Esophagus muscularis mucosa (tissue), 4 donors: ENCODE measurements at regions of chr1 and their contacts with region 1.

Region 1: DNA sequence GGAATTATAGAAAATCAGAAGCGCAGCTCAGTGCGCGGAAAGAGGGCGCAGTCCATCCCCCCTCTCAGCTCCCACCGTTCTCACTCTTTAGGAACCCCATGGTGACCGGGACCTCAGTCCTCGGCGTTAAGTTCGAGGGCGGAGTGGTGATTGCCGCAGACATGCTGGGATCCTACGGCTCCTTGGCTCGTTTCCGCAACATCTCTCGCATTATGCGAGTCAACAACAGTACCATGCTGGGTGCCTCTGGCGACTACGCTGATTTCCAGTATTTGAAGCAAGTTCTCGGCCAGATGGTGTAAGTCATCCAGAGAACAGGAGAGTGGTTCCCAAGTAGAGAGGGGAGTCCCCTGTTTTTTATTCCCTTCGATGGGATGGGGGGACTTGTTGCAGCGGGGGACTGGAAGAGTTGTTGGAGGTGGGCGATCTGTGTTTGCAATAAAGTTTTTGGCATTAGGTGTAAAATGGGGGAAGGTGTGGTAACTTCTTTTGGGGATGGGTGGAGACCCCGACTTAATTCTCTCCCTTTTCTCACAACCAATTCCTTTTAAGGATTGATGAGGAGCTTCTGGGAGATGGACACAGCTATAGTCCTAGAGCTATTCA is 620 bp downstream of the PSMB4 start:
- DNase-seq: peak; percentile 57
- H3K4me3 ChIP-seq: peak overlapping the region; percentile 69 to 93 (median 90)
- H3K27ac ChIP-seq: peak overlapping the region; percentile 88 to 93 (median 92)
- H3K4me1 ChIP-seq: peaks cover 16 to 21% (median 17%) of the 10 kb centered on the region in 4 donors
- H3K27me3 ChIP-seq: no peaks in the 10 kb centered on the region
- CTCF ChIP-seq: no peak
- EP300 ChIP-seq: no peak
- POLR2A ChIP-seq: no peak

Region 2: DNA sequence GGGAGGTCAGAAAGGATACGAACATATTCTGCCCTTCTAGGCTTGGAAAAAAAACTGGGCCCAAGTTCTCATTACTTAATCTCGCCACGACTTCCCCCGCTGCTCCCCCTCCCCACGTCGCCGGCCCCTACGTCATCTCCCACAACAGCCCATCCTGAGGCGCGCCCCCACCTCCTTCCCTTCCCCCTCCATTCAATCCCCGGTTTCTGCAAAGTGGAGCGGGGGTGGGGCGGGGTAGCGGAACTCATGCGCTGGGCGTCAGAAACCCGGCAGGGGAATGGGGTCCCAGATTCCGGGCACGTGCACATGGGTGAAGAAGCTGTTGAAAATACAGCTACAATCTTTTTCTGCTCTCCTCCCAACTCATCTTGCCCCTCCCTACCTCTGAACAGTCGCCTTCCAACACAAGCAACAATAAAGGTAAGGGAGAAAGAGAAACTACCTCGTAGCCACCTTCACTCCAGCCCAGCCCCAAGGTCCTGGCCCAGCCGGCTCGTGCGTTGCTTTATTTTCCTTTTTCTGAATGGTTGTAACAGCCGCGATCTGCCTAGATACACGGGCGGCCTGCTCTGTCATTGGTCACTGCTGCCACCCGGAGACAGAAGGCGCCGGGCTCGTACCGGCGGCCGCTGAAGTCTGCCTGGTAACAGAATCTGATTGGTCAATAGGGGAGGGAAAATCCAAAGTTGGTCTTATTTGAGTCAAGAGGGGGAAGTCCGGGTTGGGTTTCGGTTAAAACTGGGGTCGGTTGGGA is 53.0 kb before region 1 on chr1 and contains the start of gene RFX5:
- intact Hi-C with region 1: loop called (anchors 2 kb)
- DNase-seq: peak; percentile 99
- H3K4me3 ChIP-seq: peak within 1 kb of the TSS; percentile 63 to 83 (median 74)
- H3K27ac ChIP-seq: peak within 1 kb of the TSS; percentile 90 to 95 (median 92)
- H3K4me1 ChIP-seq: peaks cover 8 to 26% (median 20%) of the 10 kb centered on the region in 4 donors
- H3K27me3 ChIP-seq: no peaks in the 10 kb centered on the region
- CTCF ChIP-seq: no peak
- EP300 ChIP-seq: no peak
- POLR2A ChIP-seq: peak; percentile 14
- total RNA-seq, gene RFX5: 40.3 to 50.3 (median 45.0) TPM